ENCODE measurements at regions of chr5 and their contacts with region 1.

Region 1: DNA sequence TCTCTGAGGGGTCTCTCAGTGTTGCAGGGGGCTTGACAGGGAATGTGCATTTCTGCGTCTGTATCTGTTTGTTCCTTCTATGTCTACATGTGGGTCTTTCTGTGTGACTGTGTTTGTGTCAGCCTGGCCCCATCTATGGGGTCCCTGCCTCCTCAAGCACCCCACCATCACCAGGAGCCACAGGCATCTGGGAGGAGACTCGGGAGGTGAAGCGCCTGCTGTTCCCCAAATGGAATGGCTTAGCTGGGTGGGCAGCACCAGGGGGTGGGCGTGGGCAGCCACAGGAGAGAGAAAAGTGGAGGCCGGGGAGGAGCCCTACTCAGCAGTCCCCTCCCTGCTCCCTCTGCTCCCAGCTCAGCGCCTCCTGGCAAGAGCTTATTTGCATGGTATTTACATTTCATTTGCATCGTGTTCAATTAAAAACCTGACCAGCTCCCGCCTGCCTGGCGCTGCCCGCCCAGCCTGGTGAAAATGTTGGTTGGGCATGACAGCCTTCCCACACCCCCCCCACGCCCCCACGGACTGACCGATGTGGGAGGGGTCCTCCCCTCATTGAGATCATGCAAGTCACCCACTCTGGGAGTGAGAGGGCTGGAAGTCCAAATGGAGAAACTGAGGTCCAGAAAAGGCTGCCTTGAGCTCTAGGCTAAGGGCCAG is 50.5 kb downstream of the CXXC5 start:
- DNase-seq: no peak
- ATAC-seq: no peak
- H3K4me3 Mint-ChIP-seq: no peak overlapping the region
- H3K27ac Mint-ChIP-seq: peak overlapping the region; percentile 30
- H3K4me1 Mint-ChIP-seq: peaks cover 53% of the 10 kb centered on the region
- H3K27me3 Mint-ChIP-seq: peaks cover 13% of the 10 kb centered on the region

Region 2: GRCh38 chr5:139403787-139404483 is 294.7 kb before region 1 on chr5 and contains the start of gene SPATA24:
- CTCF ChIA-PET with region 1: no interaction called
- POLR2A ChIA-PET with region 1: no interaction called
- DNase-seq: peak; percentile 99
- ATAC-seq: peak; percentile 93
- H3K4me3 Mint-ChIP-seq: peak within 1 kb of the TSS; percentile 94
- H3K27ac Mint-ChIP-seq: peak within 1 kb of the TSS; percentile 100
- H3K4me1 Mint-ChIP-seq: peaks cover 40% of the 10 kb centered on the region
- H3K27me3 Mint-ChIP-seq: no peaks in the 10 kb centered on the region
- total RNA-seq, gene SPATA24: 3.8 to 4.0 TPM

Region 3: DNA sequence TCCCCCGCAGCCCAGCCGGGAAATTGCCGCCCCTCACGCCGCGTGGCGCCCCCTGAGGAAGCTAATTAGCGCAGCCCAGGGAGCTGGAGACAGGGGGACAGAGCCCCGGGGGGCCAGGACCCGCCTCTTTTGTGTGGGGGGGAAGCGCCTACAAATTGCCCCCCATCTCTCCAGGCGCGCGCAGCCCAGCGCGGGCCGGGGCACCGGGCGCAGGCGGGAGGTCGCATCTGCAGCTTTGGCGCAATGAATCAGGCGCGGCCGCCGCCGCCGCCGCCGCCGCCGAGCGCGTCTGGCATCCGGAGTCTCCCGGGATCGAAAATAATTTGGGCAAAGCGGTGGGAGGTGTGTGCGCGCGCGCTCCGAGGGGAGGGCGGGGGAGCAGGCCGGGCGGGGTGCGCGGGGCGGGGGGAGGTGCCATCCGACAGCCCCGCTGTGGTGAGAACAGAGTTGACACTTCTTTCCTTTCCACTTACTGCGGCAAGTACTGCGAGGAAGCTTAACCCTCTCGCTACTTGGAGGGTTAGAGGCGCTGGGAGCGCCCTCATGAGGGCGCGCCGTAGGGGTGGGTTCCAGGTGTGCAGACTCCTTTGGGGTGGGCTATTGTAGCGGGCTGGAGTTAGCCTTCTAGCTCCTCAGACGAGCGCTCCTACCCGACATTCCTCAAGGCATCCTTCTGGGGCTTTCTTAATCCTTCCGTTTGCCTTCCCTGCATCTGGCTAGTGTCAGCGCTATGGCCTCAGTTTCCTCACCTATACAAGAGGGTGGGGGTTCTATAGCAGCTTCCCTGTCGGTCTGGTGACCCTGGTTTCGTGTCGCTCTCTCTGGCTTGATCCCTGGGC is 12.7 kb after region 1 on chr5:
- CTCF ChIA-PET with region 1: interaction called, 12 read pairs
- POLR2A ChIA-PET with region 1: interaction called, 3 read pairs
- DNase-seq: peak; percentile 69
- ATAC-seq: peak; percentile 66
- H3K4me3 Mint-ChIP-seq: peak overlapping the region; percentile 64
- H3K27ac Mint-ChIP-seq: no peak overlapping the region
- H3K4me1 Mint-ChIP-seq: peaks cover 17% of the 10 kb centered on the region
- H3K27me3 Mint-ChIP-seq: peaks cover 15% of the 10 kb centered on the region